ENCODE measurements at regions of chr19 and their contacts with region 1.

Region 1: GRCh38 chr19:51259348-51260245 is 8.7 kb downstream of the SIGLECL1 start:
- DNase-seq: peak; percentile 77
- H3K4me3 Mint-ChIP-seq: no peak overlapping the region
- H3K27ac Mint-ChIP-seq: no peak overlapping the region
- H3K4me1 Mint-ChIP-seq: peaks cover 40% of the 10 kb centered on the region
- H3K27me3 Mint-ChIP-seq: peaks cover 19% of the 10 kb centered on the region

Region 2: DNA sequence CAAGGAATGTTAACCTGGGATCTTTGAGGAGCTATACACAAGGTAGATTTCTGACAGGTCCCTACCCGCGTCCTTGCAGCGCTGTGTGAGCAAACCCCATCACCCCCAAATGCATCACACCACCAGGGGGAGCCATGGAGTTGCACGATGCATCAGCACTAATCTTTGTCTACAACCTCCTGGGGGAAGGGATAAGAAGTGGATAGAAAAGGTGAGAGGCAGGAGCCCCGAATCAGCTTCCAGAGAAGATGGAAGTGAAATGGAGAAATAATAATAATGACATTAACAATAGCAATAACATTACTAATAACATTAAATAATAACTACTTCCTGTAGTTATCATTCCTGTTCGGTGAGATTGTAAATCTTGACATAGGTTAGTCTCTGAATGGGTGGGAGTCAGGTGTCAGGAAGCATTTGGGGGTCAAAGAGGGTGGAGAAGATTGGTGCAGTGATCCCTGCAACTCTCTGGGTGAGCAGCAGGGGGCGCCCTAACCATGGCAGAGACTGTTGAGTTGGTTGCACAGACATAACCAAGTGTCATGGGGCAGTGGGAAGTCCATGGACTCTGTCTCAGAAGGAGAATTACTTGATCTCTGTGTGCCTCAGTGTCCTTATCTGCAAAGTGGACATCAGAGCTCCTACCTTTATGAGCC is 101.0 kb before region 1 on chr19:
- CTCF ChIA-PET with region 1: interaction called, 125 read pairs
- DNase-seq: peak; percentile 88
- H3K4me3 Mint-ChIP-seq: no peak overlapping the region
- H3K27ac Mint-ChIP-seq: peak overlapping the region; percentile 46
- H3K4me1 Mint-ChIP-seq: peaks cover 8% of the 10 kb centered on the region
- H3K27me3 Mint-ChIP-seq: peaks cover 41% of the 10 kb centered on the region

Region 3: GRCh38 chr19:51168564-51169282 is 90.9 kb before region 1 on chr19:
- CTCF ChIA-PET with region 1: interaction called, 30 read pairs
- DNase-seq: no peak
- H3K4me3 Mint-ChIP-seq: peak overlapping the region; percentile 32
- H3K27ac Mint-ChIP-seq: no peak overlapping the region
- H3K4me1 Mint-ChIP-seq: peaks cover 35% of the 10 kb centered on the region
- H3K27me3 Mint-ChIP-seq: peaks cover 31% of the 10 kb centered on the region

Region 4: GRCh38 chr19:51181913-51182419 is 77.6 kb before region 1 on chr19:
- CTCF ChIA-PET with region 1: no interaction called
- DNase-seq: no peak
- H3K4me3 Mint-ChIP-seq: no peak overlapping the region
- H3K27ac Mint-ChIP-seq: no peak overlapping the region
- H3K4me1 Mint-ChIP-seq: peaks cover 6% of the 10 kb centered on the region
- H3K27me3 Mint-ChIP-seq: peaks cover 60% of the 10 kb centered on the region

Region 5: GRCh38 chr19:51271067-51271466 is 11.5 kb after region 1 on chr19:
- CTCF ChIA-PET with region 1: interaction called, 13 read pairs
- DNase-seq: no peak
- H3K4me3 Mint-ChIP-seq: no peak overlapping the region
- H3K27ac Mint-ChIP-seq: no peak overlapping the region
- H3K4me1 Mint-ChIP-seq: peaks cover 26% of the 10 kb centered on the region
- H3K27me3 Mint-ChIP-seq: peaks cover 37% of the 10 kb centered on the region

Region 6: DNA sequence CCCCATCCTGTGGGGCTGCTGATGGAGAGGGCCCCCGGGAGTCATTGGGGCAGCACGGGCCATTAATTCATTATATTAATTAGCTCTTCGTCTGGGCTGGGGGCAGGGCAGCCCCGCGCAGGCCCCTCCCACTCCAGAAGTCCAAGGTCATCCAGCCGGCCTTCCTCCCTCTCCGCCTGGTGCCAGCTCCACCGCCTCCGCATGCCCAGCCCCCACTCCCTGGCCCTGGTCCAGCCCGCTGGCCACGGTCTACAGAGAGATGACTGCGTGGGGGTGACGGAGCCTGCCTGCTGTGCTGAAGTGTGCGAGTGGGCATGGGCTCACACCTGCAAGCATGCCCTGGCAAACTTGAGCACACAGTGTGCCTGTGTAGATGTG is 60.7 kb after region 1 on chr19:
- CTCF ChIA-PET with region 1: no interaction called
- DNase-seq: no peak
- H3K4me3 Mint-ChIP-seq: no peak overlapping the region
- H3K27ac Mint-ChIP-seq: no peak overlapping the region
- H3K4me1 Mint-ChIP-seq: peaks cover 2% of the 10 kb centered on the region
- H3K27me3 Mint-ChIP-seq: peaks cover 28% of the 10 kb centered on the region

Region 7: DNA sequence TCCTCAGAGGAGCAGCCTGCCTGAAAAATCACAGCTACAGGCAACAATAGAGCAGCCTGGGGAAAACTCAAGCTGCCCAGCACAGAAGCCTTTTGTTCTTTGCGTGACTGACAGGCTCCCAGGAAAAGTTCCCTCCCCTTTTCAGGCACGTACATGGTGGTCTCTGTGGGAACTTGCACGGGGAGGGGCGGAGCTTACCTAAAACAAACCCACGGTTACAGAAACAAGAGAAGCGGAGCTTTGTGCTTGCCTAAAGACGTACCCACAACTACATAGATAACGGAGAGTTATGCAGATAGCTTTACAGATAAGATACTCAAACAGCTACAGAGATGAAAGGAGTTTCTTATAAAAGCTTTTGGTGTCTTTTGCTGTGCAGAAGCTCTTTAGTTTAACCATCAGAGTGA is 95.1 kb after region 1 on chr19:
- CTCF ChIA-PET with region 1: no interaction called
- DNase-seq: peak; percentile 63
- H3K4me3 Mint-ChIP-seq: peak overlapping the region; percentile 6
- H3K27ac Mint-ChIP-seq: peak overlapping the region; percentile 81
- H3K4me1 Mint-ChIP-seq: peaks cover 31% of the 10 kb centered on the region
- H3K27me3 Mint-ChIP-seq: no peaks in the 10 kb centered on the region

Measured in activated naive CD4-positive, alpha-beta T cell treated with anti-CD3 and anti-CD28 coated beads, Interleukin-2, amount 10 ng/mL, durations not matched to agents 7 days and 5 days (primary cell).